ENCODE measurements at regions of chr3 and their contacts with region 1.

Region 1: DNA sequence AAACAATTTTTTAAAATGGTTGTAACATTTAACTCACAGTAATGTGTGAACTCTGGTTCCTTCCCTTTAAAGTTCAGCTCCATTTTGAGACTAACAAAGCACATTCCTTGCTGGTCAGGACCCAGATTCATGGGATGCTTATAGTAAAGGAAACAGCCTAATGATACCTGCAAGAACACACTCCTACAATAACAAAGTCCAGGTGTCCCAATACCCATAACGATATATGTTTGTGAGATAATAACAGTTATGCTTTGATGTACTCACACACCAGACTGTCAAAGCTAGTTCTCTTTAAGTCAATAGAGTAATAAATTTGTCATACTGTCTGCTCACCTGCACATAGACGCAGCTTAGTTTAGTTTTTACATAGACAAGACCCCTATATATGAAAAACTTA is 15.9 kb upstream of the CCDC50 start:
- DNase-seq: peak in 1 of 2 experiments; percentile 46
- H3K4me3 ChIP-seq: no peak overlapping the region
- H3K4me3 Mint-ChIP-seq: no peak overlapping the region
- H3K27ac Mint-ChIP-seq: peak overlapping the region; percentile 26
- H3K4me1 ChIP-seq: peaks cover 9% of the 10 kb centered on the region
- H3K4me1 Mint-ChIP-seq: peaks cover 6% of the 10 kb centered on the region
- H3K27me3 ChIP-seq: no peaks in the 10 kb centered on the region
- H3K27me3 Mint-ChIP-seq: no peaks in the 10 kb centered on the region
- CTCF ChIP-seq: no peak

Region 2: GRCh38 chr3:191301782-191302411 is 11.4 kb before region 1 on chr3:
- CTCF ChIA-PET with region 1: no interaction called
- POLR2A ChIA-PET with region 1: no interaction called
- intact Hi-C with region 1: loop called (anchors 1 kb)
- DNase-seq: no peak
- H3K4me3 ChIP-seq: no peak overlapping the region
- H3K4me3 Mint-ChIP-seq: no peak overlapping the region
- H3K27ac Mint-ChIP-seq: no peak overlapping the region
- H3K4me1 ChIP-seq: peaks cover 4% of the 10 kb centered on the region; the same call in 1 of the 2 replicates
- H3K4me1 Mint-ChIP-seq: peaks cover 13% of the 10 kb centered on the region
- H3K27me3 ChIP-seq: no peaks in the 10 kb centered on the region
- H3K27me3 Mint-ChIP-seq: no peaks in the 10 kb centered on the region
- CTCF ChIP-seq: no peak